ENCODE measurements at regions of chr5 and their contacts with region 1.

Region 1: GRCh38 chr5:31809050-31809870 is 170.3 kb downstream of the PDZD2 start:
- DNase-seq: peak; percentile 71
- H3K4me3 Mint-ChIP-seq: no peak overlapping the region
- H3K27ac Mint-ChIP-seq: no peak overlapping the region
- H3K4me1 Mint-ChIP-seq: no peaks in the 10 kb centered on the region
- H3K27me3 Mint-ChIP-seq: peaks cover 38% of the 10 kb centered on the region
- CTCF ChIP-seq: no peak

Region 2: DNA sequence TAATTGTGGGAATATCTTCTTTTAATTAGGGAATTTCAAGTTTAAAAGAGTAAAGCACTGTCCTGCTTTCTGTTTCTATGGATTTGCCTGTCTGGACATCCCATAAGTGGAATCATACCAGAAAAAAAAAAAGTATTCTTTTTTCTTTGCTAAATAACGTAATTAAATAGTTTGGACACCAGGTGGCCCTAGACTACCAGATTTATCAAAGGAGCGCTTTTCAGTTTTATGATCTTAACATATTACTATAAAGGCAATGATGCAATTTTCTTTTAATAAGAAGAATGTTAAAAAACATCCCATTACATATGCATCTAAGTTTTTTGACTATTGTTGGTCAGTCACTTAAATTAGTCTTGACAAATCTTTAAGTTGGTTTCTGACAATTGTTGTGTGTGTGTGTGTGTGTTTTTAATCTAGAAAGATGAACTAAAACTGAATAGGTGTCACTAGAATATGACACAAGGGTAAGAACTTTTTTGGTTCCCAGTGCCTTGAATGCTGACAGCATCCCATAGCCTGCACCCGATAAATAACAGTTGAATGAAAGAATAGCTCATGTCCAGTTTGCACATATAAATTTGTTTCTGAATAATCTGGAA is 227.7 kb before region 1 on chr5:
- CTCF ChIA-PET with region 1: interaction called, 7 read pairs
- intact Hi-C with region 1: loop called (anchors 1 kb)
- DNase-seq: peak; percentile 24
- H3K4me3 Mint-ChIP-seq: no peak overlapping the region
- H3K27ac Mint-ChIP-seq: no peak overlapping the region
- H3K4me1 Mint-ChIP-seq: no peaks in the 10 kb centered on the region
- H3K27me3 Mint-ChIP-seq: peaks cover 41% of the 10 kb centered on the region
- CTCF ChIP-seq: peak; percentile 19

Region 3: GRCh38 chr5:31638748-31639418 is 170.4 kb before region 1 on chr5 and contains the start of gene PDZD2:
- CTCF ChIA-PET with region 1: interaction called, 6 read pairs
- intact Hi-C with region 1: loop called (anchors 2 kb)
- DNase-seq: peak; percentile 79
- H3K4me3 Mint-ChIP-seq: peak within 1 kb of the TSS; percentile 75
- H3K27ac Mint-ChIP-seq: no peak within 1 kb of the TSS
- H3K4me1 Mint-ChIP-seq: no peaks in the 10 kb centered on the region
- H3K27me3 Mint-ChIP-seq: peaks cover 31% of the 10 kb centered on the region
- CTCF ChIP-seq: no peak
- total RNA-seq, gene PDZD2: 0.76 and 0.97 TPM in 2 replicates

Region 4: DNA sequence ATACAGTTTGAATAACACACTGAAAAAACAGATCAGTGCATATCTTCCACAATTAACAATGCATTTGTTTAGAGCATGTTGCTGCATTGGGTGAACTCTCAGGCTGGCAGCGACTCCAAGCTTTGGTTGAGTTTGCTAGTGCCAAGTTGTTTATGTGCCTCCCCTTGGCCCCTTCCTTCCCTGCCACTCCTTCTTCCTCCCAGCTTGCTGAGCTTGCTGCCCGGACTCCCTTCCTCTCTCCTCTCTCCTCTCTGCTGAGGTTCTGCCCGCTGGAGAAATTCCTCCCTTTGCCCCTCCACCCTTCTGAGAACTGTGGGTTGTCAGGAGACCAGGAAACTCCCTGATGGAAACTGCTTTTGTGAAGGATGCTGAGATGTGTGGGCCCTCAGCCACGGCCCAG is 76.9 kb after region 1 on chr5:
- CTCF ChIA-PET with region 1: interaction called, 11 read pairs
- intact Hi-C with region 1: no loop called
- DNase-seq: no peak
- H3K4me3 Mint-ChIP-seq: no peak overlapping the region
- H3K27ac Mint-ChIP-seq: no peak overlapping the region
- H3K4me1 Mint-ChIP-seq: peaks cover 14% of the 10 kb centered on the region
- H3K27me3 Mint-ChIP-seq: peaks cover 44% of the 10 kb centered on the region
- CTCF ChIP-seq: no peak

Region 5: DNA sequence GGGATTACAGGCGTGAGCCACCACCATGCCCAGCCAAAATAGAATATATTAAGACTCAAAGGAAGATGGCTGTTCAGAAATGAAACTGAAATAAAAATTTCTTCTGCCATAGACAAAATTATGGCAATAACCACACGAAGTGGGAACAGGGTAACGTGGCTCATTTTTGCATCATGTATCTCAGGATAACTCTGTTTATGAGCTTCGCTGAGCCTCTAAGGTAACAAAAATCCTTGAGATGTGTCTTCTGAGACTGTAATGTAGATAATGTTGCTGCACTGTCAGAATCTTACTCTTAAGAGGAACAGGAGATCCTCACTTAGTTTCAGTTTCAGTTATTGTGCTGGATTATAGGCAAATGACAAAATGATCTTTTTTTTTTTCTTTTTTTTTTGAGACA is 211.0 kb after region 1 on chr5:
- CTCF ChIA-PET with region 1: no interaction called
- intact Hi-C with region 1: no loop called
- DNase-seq: no peak
- H3K4me3 Mint-ChIP-seq: no peak overlapping the region
- H3K27ac Mint-ChIP-seq: no peak overlapping the region
- H3K4me1 Mint-ChIP-seq: no peaks in the 10 kb centered on the region
- H3K27me3 Mint-ChIP-seq: peaks cover 39% of the 10 kb centered on the region
- CTCF ChIP-seq: no peak